ENCODE measurements at regions of chr1 and their contacts with region 1.

Region 1: DNA sequence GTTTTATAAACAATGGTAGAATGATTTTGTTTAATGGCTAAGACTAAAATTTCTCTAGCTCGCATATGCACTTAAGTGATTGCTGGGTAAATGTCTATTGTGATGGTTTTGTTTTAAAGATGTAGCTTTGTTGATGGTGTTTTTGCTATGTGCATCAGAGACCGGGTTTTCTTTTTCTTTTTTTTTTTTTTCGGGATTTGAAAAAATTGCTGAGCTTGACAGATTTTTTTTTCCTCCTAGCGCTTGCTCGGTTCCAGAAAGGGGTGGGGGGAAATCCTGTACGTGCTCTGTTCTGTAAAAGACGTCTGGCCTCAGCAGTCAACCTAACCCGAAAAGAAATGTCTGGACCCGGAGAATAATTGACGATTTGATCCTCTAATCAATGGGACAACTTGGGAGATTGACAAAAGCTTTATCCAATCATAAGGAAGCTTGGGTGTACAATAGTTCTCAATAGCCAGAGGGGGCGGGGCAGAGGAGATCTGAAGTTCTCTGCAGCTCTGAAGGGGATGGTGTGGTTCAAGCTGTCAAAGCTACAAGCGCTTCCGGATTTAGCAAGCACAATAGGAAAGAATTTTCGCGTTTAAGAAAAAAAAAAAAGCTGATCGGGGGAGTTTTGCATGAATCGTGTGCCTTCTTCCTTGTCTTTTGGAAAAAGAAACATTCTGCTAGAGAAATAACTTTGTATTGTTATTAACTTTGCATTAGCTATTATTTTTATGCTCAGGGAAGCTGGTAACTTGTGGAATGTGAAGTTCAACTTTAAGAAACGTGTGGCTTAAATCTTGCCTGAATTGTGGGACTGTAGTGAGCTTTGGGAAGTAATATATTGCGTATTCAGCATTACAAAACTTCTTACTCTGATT is 4.5 kb upstream of the NFIA start:
- DNase-seq: peak; percentile 99
- ATAC-seq: peak; percentile 45
- H3K4me3 ChIP-seq: peak overlapping the region; percentile 76
- H3K27ac ChIP-seq: peak overlapping the region; percentile 90
- H3K4me1 ChIP-seq: peaks cover 42% of the 10 kb centered on the region
- H3K27me3 ChIP-seq: no peaks in the 10 kb centered on the region
- CTCF ChIP-seq: no peak

Region 2: DNA sequence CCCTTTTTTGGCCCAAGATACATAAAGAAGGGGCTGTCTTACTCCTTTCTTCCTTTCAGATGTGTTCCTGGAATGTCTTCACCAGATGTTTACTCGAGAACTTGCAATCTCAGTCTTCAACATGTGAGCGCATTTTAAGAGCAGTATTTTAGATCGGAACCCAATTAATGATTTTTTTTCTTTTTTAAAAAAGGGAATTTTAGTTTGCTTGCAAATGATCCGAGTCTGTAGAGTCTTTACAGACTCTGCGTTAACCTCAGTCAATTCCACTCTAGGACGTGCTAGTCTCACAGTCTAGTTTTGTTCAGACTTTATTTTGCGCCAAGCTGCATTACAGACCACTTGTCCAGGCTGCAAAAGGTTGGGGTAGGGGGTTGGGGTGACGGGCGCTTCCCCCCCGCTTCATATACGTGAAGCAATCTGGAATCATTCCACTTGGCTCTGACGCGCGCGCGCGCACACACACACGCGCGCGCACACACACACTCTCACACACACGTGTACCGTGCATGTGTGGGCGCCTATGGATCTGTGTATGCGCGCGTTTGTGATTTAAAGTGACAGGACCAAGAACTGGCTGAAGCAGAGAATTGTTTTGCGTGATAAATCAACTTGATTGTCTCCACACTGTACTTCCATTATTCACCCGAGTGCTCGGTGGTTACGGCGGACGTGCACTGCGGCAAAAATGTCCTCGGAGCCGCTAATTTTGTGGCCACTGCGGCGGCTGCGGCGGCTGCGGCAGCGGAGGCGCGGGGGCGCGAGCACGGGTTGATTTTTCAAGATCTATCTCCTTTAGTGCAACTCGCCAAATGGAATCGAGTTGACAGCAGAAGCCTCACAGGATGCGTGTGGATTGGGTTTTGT is 21.1 kb before region 1 on chr1:
- CTCF ChIA-PET with region 1: no interaction called
- POLR2A ChIA-PET with region 1: interaction called, 30 read pairs
- intact Hi-C with region 1: loop called (anchors 1 kb)
- DNase-seq: peak; percentile 65
- ATAC-seq: peak; percentile 83
- H3K4me3 ChIP-seq: peak overlapping the region; percentile 93
- H3K27ac ChIP-seq: peak overlapping the region; percentile 20; the same call in 1 of the 2 replicates
- H3K4me1 ChIP-seq: peaks cover 13% of the 10 kb centered on the region
- H3K27me3 ChIP-seq: no peaks in the 10 kb centered on the region
- CTCF ChIP-seq: no peak

Region 3: DNA sequence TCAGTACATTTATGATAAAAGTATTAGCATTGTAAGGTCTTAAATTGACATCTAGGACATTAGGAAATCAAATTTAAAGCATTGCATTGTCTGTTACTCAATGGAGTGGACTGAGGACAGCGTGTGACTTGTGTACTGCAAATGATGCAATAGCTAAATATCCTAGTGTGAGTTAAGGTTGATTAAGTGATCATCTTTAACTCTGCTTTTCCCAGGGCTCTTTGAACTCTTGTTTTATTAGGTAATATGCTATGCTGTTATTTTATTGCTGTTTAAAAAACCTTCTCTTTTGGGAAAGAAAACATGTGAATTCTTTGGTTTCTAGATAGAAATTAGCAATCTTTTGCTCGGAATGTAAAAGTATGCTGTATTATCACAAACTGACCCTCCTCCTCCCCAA is 43.1 kb after region 1 on chr1:
- CTCF ChIA-PET with region 1: no interaction called
- POLR2A ChIA-PET with region 1: no interaction called
- intact Hi-C with region 1: no loop called
- DNase-seq: no peak
- ATAC-seq: no peak
- H3K4me3 ChIP-seq: no peak overlapping the region
- H3K27ac ChIP-seq: no peak overlapping the region
- H3K4me1 ChIP-seq: peaks cover 17% of the 10 kb centered on the region
- H3K27me3 ChIP-seq: no peaks in the 10 kb centered on the region
- CTCF ChIP-seq: no peak

Region 4: GRCh38 chr1:61141288-61142042 is 63.6 kb after region 1 on chr1:
- CTCF ChIA-PET with region 1: no interaction called
- POLR2A ChIA-PET with region 1: interaction called, 8 read pairs
- intact Hi-C with region 1: loop called (anchors 1 kb)
- DNase-seq: peak; percentile 68
- ATAC-seq: peak; percentile 51
- H3K4me3 ChIP-seq: peak overlapping the region; percentile 4; the same call in 1 of the 2 replicates
- H3K27ac ChIP-seq: peak overlapping the region; percentile 82
- H3K4me1 ChIP-seq: peaks cover 58% of the 10 kb centered on the region
- H3K27me3 ChIP-seq: no peaks in the 10 kb centered on the region
- CTCF ChIP-seq: no peak

Region 5: GRCh38 chr1:61210435-61211154 is 132.7 kb after region 1 on chr1:
- CTCF ChIA-PET with region 1: no interaction called
- POLR2A ChIA-PET with region 1: no interaction called
- intact Hi-C with region 1: loop called (anchors 10 kb)
- DNase-seq: peak; percentile 15
- ATAC-seq: peak; percentile 58
- H3K4me3 ChIP-seq: no peak overlapping the region
- H3K27ac ChIP-seq: no peak overlapping the region
- H3K4me1 ChIP-seq: no peaks in the 10 kb centered on the region
- H3K27me3 ChIP-seq: no peaks in the 10 kb centered on the region
- CTCF ChIP-seq: peak; percentile 41; the same call in 1 of the 2 replicates

Region 6: DNA sequence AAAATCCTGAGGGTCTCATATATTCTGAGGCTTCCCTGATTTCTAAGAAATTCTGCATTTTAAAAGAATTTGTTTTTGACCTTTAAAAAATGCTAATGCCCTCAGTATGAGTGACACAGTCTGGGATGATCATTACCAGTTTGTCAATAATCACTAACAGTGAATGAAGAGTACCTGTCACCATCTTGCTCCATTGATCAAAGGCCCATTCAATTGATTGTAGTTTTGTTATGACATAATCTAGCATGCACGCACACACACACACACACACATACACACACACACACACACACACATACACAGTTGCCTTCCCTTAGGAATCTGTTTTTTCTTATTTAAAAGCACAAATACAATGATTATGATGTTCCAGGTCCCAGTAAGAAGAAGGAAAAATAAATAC is 254.9 kb after region 1 on chr1:
- CTCF ChIA-PET with region 1: interaction called, 15 read pairs
- POLR2A ChIA-PET with region 1: no interaction called
- intact Hi-C with region 1: no loop called
- DNase-seq: no peak
- ATAC-seq: no peak
- H3K4me3 ChIP-seq: no peak overlapping the region
- H3K27ac ChIP-seq: no peak overlapping the region
- H3K4me1 ChIP-seq: peaks cover 24% of the 10 kb centered on the region
- H3K27me3 ChIP-seq: no peaks in the 10 kb centered on the region
- CTCF ChIP-seq: no peak

Region 7: DNA sequence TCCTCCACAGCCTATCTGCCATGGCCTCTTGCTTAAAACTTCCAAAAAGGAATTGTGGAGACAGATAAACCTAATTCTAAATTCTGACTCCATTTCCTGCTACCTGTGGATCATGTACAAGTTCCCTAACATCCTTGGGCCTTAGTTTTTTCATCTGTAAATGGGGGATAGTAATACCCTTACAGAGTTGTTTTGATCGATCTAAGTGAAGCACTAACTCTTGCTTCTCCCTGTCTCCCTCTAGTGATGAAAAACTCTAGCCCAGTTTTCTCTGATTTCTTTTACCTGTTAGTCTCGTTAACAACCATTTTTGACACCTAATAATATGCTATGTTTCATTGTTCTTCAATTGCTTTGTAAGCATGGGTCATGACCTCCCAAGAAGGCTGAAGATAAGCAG is 581.2 kb after region 1 on chr1:
- CTCF ChIA-PET with region 1: no interaction called
- POLR2A ChIA-PET with region 1: no interaction called
- intact Hi-C with region 1: no loop called
- DNase-seq: peak; percentile 44
- ATAC-seq: no peak
- H3K4me3 ChIP-seq: no peak overlapping the region
- H3K27ac ChIP-seq: no peak overlapping the region
- H3K4me1 ChIP-seq: no peaks in the 10 kb centered on the region
- H3K27me3 ChIP-seq: no peaks in the 10 kb centered on the region
- CTCF ChIP-seq: peak; percentile 68

Region 8: DNA sequence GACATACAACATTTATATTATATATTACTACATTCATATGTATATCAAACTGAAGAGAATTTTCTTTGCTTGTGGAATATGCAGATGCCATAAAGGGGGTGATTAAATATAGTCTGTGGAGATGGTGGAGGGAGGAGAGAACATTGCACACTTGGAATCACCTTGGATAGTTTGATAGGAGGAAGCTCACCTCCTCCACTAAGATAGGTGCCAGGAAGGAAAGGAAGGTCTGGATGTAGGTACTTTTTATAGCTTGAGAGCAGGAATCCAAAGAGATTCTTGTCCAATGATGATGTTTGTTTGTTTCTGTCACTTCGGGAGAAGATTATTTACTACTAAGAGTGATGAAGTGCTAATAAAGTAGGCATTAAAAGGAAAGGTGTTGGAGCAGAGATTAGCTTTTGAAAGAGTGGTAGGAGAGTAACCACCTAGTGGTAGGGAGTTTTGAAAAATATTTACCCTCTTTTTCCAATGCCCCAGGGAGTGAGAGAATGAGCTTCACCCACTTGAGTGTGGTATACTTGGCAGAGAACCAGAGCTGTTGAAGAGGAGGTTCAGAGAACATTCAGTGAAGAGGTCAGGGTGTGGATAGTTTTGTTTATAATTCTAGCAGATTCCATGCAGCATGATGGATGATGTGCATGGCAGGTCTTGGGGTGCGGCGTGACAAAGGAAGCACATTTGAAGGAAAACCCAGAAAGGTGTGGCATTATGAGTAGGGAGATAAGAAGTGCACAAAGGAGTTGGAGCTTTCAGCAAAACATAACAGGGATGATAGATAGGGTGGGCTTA is 809.4 kb after region 1 on chr1:
- CTCF ChIA-PET with region 1: no interaction called
- POLR2A ChIA-PET with region 1: interaction called, 16 read pairs
- intact Hi-C with region 1: no loop called
- DNase-seq: no peak
- ATAC-seq: no peak
- H3K4me3 ChIP-seq: no peak overlapping the region
- H3K27ac ChIP-seq: no peak overlapping the region
- H3K4me1 ChIP-seq: no peaks in the 10 kb centered on the region
- H3K27me3 ChIP-seq: no peaks in the 10 kb centered on the region
- CTCF ChIP-seq: no peak

Measured in PC-3 (cell line).